ENCODE measurements at regions of chr9 and their contacts with region 1.

Region 1: DNA sequence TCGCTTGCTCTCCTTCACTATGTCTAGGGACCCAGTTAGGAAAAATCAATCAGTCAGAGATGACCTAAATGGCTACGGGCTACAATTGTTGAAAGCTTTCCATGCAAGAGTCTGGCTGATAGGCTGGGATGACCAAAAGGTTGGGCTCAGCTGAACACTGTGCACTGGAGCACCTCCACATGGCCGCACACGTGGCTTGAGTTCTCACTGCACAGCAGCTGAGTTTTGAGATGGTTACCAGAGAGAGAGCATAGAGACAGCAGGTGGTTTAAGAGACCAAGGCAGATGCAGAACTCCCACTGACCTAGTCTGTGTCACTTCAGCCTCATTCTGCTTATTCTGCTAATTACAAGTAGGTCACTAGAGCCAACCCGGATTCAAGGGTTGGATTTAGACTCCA is 2354.8 kb upstream of the C9orf72 start:
- DNase-seq: no peak
- ATAC-seq: no peak

Region 2: DNA sequence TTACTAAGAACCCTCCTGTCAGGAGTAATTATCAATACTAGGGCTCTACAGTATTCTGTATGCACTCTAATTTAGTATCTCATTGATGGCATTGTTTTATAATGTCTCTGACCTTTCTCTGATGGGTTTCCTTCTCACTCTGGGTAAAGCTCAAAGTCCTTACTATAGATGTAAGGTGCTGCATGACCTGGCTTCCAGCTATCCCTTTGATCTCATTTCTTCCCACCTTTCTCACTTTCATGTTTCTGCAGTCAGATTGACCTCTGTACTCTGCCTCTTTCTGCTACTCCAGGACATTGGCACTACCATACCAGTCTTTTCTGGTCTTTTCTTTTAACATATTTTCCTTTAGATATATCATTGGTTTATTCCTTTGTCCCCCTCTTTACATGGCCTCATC is 22.0 kb before region 1 on chr9:
- intact Hi-C with region 1: no loop called
- DNase-seq: no peak
- ATAC-seq: no peak

Region 3: DNA sequence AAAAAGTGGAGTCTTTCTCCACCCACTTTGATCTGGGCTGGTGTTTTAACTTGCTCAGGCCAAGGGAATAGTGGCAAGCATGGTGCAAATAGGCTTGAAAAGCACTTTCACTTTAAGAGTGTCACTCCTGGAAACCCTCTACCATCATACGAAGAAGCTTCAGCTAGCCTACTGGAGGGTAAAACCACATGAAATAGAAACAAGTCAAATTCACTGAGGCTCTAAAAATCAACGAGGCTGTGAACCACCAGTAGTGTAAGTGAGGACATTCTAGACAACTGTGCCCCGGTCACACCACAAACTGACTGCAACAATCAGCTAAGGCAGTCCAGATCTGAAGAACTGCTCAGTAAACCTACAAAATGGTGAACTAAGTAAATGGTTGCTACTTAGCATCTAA is 11.5 kb after region 1 on chr9:
- intact Hi-C with region 1: loop called (anchors 1 kb)
- DNase-seq: no peak
- ATAC-seq: no peak